ENCODE measurements at regions of chr20 and their contacts with region 1.

Region 1: DNA sequence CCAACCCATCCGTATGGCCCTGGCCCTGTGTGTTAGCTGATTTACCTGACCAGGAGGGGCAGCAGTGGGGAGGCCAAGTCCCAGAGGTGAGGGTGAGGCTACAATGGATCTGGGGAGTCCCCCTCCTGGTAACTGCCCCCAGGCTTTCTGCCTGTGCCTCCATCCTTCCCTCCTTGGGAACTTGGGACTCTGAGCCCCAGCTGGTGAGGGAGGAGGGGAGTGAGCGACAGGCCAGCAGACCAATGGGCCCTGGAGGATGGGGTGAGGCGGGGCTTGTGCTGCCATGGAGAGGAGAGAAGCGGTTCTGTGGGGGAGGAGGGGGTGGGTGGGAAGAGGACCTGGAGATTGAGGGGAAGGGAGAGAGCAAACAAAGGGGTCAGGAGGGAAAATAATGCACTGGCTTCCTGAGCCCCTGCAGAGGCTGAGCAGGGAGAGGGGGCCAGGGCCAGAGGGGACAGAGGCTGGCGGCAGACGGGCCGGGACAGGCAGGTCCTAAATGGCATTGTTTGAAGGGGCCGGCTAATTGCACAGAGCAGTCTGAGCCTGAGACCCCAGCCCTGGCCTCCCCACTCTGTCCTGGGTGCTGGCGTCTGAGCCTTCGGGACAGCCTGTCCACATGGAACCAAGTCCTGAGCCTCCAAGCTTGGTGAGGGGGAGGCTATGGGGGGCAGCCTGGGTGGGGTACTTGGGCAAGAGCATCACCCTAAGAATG is 17.5 kb downstream of the DNMT3B start:
- DNase-seq: no peak
- ATAC-seq: no peak
- H3K4me3 ChIP-seq: no peak overlapping the region
- H3K4me1 ChIP-seq: no peaks in the 10 kb centered on the region
- CTCF ChIP-seq: no peak

Region 2: GRCh38 chr20:32674362-32674789 is 105.3 kb before region 1 on chr20:
- intact Hi-C with region 1: loop called (anchors 5 to 10 kb)
- DNase-seq: peak in 2 of 3 donors; percentile 46 to 68
- ATAC-seq: peak; percentile 63
- H3K4me3 ChIP-seq: no peak overlapping the region
- H3K4me1 ChIP-seq: no peaks in the 10 kb centered on the region
- CTCF ChIP-seq: peak; percentile 43